MCF 10A (cell line): ENCODE measurements at regions of chr5 and their contacts with region 1.

Region 1: GRCh38 chr5:151315998-151316597 is 12.5 kb upstream of the SLC36A3 start:
- DNase-seq: peak; percentile 88
- H3K4me3 Mint-ChIP-seq: no peak overlapping the region
- H3K27ac Mint-ChIP-seq: no peak overlapping the region
- H3K4me1 Mint-ChIP-seq: no peaks in the 10 kb centered on the region
- H3K27me3 Mint-ChIP-seq: peaks cover 13% of the 10 kb centered on the region
- CTCF ChIP-seq: peak; percentile 97

Region 2: DNA sequence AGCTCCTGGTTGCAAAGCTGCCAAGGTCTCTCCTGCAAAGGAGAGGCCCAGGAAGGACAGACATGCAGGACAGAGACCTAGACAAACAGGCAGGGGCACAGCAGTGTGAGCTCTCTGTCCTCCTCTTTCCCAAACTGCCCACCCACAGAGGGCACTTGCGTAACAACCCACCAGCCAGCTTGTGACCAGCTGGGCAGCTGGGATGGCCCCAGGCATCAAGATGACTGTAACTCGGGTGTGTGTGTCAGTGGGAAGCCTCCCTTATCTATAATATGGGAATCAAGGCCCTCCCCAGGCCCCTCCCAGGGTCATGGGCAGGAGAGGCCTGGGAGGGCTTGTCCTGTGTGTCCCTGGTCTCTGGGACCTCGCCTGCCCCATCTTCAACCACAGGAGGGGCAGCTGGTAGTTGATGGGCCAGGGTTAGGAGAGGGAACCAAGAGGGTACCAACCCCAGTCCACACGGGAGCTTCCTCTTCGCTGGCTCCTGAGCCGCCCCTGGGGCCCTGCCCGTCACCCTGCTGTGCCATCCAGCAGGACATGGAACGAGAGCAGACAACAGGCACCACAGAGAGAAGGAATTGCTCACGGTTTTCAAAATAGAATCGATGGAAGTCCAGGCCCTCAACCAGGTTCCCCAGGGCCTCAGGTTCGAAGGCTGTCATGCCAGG is 1088.4 kb before region 1 on chr5:
- CTCF ChIA-PET with region 1: no interaction called
- POLR2A ChIA-PET with region 1: no interaction called
- intact Hi-C with region 1: no loop called
- DNase-seq: peak; percentile 67
- H3K4me3 Mint-ChIP-seq: no peak overlapping the region
- H3K27ac Mint-ChIP-seq: no peak overlapping the region
- H3K4me1 Mint-ChIP-seq: peaks cover 10% of the 10 kb centered on the region
- H3K27me3 Mint-ChIP-seq: no peaks in the 10 kb centered on the region
- CTCF ChIP-seq: no peak

Region 3: DNA sequence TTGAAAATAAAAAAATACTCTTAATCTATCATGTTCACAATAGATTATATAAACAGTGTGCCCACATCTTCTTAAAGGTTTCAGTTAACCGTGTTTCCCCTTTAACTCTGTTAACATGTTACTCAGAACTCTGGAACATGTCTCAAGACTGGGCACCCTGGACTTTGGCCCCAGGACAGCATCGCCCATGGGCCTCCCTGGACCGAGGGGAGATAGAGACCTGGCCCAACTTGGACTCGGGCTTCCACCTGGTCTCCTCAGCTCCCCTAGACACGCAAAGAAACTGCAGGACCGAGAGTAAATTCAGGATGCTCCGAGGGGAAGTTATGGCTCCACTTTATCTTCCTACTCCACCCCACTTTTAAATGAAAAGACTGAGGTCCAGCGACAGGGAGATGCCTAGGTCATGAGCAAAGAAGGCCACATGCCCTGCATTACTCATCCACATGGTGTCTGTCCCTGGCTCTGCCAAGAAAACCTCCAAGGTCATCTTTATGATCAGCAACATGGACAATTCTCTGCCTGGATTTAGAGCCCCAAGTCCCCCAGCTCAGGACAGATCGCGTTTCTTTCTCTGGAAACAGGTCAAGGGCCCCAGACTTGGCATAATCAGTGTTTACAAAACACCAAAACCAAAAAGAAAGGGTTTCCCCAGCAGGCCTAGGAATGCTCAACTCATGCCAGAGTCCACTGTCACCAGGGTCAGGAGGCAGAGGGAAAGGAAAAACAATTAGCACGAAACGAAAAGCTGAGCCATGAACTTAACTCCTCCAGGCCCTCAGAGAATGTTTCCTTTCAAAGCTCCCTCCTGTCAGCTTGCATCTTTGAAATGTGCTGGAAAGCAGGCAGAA is 278.3 kb before region 1 on chr5:
- CTCF ChIA-PET with region 1: interaction called, 11 read pairs
- POLR2A ChIA-PET with region 1: no interaction called
- intact Hi-C with region 1: no loop called
- DNase-seq: no peak
- H3K4me3 Mint-ChIP-seq: no peak overlapping the region
- H3K27ac Mint-ChIP-seq: peak overlapping the region; percentile 75
- H3K4me1 Mint-ChIP-seq: peaks cover 7% of the 10 kb centered on the region
- H3K27me3 Mint-ChIP-seq: no peaks in the 10 kb centered on the region
- CTCF ChIP-seq: no peak

Region 4: GRCh38 chr5:151202381-151203139 is 113.5 kb before region 1 on chr5:
- CTCF ChIA-PET with region 1: no interaction called
- POLR2A ChIA-PET with region 1: no interaction called
- intact Hi-C with region 1: no loop called
- DNase-seq: peak; percentile 99
- H3K4me3 Mint-ChIP-seq: no peak overlapping the region
- H3K27ac Mint-ChIP-seq: no peak overlapping the region
- H3K4me1 Mint-ChIP-seq: peaks cover 11% of the 10 kb centered on the region
- H3K27me3 Mint-ChIP-seq: no peaks in the 10 kb centered on the region
- CTCF ChIP-seq: no peak

Region 5: DNA sequence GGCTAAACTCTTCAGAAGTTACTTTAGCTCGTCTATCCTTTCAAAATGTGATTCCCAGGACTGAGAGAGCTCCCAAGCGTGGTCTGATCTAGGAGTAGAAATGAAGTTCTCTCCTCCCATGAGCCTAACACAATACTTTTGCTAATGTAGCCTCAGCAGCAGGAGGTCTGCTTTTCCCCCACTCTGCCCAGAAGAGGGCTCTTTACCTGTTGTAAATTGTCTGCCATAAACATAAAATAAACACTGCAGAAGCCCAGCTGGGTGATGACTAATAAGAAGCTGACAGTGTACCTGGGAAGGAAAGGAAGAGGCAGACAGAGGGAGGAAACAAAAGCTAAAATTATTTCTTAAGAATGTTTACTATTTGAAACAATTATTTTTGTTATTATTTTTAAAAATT is 27.9 kb before region 1 on chr5:
- CTCF ChIA-PET with region 1: interaction called, 17 read pairs
- POLR2A ChIA-PET with region 1: interaction called, 3 read pairs
- intact Hi-C with region 1: no loop called
- DNase-seq: peak; percentile 69
- H3K4me3 Mint-ChIP-seq: no peak overlapping the region
- H3K27ac Mint-ChIP-seq: no peak overlapping the region
- H3K4me1 Mint-ChIP-seq: peaks cover 6% of the 10 kb centered on the region
- H3K27me3 Mint-ChIP-seq: no peaks in the 10 kb centered on the region
- CTCF ChIP-seq: peak; percentile 5

Region 6: GRCh38 chr5:151298063-151298855 is 17.8 kb before region 1 on chr5:
- CTCF ChIA-PET with region 1: interaction called, 14 read pairs
- POLR2A ChIA-PET with region 1: no interaction called
- intact Hi-C with region 1: no loop called
- DNase-seq: peak; percentile 90
- H3K4me3 Mint-ChIP-seq: no peak overlapping the region
- H3K27ac Mint-ChIP-seq: no peak overlapping the region
- H3K4me1 Mint-ChIP-seq: peaks cover 23% of the 10 kb centered on the region
- H3K27me3 Mint-ChIP-seq: peaks cover 36% of the 10 kb centered on the region
- CTCF ChIP-seq: peak; percentile 68

Region 7: DNA sequence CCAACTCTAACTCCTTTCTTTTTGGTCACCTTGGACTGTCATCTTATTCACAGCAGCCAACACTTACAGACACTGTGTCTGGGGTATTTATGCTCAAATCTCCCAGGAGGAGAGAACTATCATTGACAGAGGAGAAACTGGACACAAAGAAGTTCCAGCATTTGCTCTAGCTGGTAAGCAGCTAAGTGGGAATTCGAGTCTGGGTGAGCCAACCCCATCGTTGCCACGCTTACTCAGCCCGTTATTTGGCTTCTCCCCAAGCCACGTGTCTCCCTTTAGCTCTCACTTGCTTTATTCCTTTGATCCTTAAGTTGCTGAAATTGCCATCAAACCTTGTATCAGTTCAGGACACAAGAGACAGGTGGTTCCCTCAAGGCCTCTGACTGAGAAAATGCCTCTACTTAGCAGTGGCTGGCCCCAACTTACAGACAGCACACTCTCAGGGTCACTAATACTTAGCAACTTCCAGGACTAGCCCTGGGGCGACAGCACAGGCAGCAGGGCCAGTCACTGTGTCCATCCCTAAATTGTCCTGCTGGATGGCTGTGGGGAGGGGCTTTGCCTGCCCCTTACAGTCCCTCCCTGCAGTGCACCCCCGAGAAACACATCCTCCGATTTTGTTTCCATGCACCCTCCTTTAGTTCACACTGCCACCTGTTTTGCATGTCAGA is 29.8 kb after region 1 on chr5:
- CTCF ChIA-PET with region 1: interaction called, 11 read pairs
- POLR2A ChIA-PET with region 1: no interaction called
- intact Hi-C with region 1: no loop called
- DNase-seq: peak; percentile 68
- H3K4me3 Mint-ChIP-seq: no peak overlapping the region
- H3K27ac Mint-ChIP-seq: no peak overlapping the region
- H3K4me1 Mint-ChIP-seq: peaks cover 9% of the 10 kb centered on the region
- H3K27me3 Mint-ChIP-seq: peaks cover 30% of the 10 kb centered on the region
- CTCF ChIP-seq: no peak

Region 8: DNA sequence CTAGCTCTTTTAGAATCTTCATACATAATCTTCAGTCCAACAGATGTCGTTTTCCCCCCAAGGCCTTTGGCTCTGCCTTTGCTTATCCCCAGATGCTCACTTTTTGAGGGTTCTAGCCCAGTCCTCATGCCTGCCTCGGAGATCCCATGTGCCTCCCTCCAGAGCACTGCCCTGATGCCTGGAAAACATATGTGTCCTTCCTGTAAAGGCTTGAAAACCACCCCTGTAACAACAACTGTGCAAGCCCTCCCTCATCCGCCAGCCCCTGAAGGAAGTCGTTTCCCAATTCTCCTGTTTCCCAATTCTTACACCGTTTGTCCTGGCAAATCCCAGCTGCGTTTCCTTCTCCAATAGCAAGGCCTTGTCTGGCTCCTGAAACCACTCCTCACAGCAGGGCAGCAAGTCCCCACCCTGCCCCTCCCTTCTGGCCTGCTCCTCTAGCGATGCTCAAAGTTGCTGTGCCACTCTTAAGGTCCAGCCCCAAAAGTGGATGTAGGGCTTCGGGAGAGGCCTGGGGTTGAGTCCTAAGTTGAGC is 183.5 kb after region 1 on chr5:
- CTCF ChIA-PET with region 1: interaction called, 3 read pairs
- POLR2A ChIA-PET with region 1: no interaction called
- intact Hi-C with region 1: loop called (anchors 2 kb)
- DNase-seq: peak; percentile 46
- H3K4me3 Mint-ChIP-seq: no peak overlapping the region
- H3K27ac Mint-ChIP-seq: no peak overlapping the region
- H3K4me1 Mint-ChIP-seq: no peaks in the 10 kb centered on the region
- H3K27me3 Mint-ChIP-seq: no peaks in the 10 kb centered on the region
- CTCF ChIP-seq: no peak